Activated CD4-positive, alpha-beta T cell treated with anti-CD3 and anti-CD28 coated beads for 36 hours (primary cell): ENCODE measurements at regions of chr7 and their contacts with region 1.

Region 1: GRCh38 chr7:90155206-90155605 is 937 bp downstream of the STEAP1 start:
- DNase-seq: no peak
- ATAC-seq: no peak
- H3K4me3 Mint-ChIP-seq: no peak overlapping the region
- H3K27ac Mint-ChIP-seq: no peak overlapping the region
- H3K4me1 Mint-ChIP-seq: peaks cover 5% of the 10 kb centered on the region
- H3K27me3 Mint-ChIP-seq: peaks cover 31% of the 10 kb centered on the region

Region 2: DNA sequence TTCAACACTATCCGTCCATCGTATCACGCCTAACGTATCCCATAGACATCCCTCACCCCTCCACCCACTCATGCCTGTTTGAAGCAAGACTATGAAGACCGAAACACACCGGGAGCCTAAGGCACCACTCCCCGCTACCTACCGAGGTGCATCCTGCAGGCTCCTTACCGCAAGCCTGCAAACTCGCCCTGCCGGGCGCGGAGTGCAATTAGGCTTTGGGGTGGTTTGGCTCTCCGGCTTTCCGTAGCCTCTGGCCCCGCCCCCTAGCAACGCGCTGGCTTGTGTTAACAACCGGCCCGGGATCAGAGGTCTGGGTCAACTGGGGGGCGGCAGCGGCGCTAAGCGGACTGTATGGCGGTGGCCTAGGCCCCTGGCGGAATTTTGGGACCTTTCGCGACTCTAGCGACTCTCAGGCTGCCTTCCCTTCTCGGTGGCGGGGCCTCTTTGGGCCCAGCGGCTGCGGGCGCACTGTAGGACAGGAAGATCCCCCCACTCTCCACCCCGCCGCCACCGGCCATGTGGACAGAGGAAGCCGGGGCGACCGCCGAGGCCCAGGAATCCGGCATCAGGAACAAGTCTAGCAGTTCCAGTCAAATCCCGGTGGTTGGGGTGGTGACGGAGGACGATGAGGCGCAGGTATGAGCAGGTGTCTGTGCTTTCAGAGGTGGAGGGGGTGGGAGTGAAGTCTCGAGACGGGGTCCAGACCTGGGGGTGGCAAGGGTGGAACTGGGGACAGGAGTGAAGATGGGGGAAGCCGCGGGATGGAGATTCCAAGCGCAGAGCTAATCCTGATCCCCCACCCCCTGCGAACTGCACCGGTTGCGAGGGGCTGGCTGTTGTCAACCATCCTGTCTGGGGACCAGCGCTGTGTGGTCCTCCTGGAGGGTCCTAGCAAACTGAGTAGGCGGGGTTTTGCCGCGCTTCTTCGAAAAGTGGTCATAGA is 90.0 kb after region 1 on chr7 and contains the start of gene CFAP69:
- CTCF ChIA-PET with region 1: interaction called, 4 read pairs
- POLR2A ChIA-PET with region 1: no interaction called
- intact Hi-C with region 1: loop called in 1 of 2 experiments (anchors 1 kb)
- DNase-seq: peak; percentile 92
- ATAC-seq: peak; percentile 97
- H3K4me3 Mint-ChIP-seq: peak within 1 kb of the TSS; percentile 77
- H3K27ac Mint-ChIP-seq: peak within 1 kb of the TSS; percentile 0
- H3K4me1 Mint-ChIP-seq: peaks cover 16% of the 10 kb centered on the region
- H3K27me3 Mint-ChIP-seq: peaks cover 32% of the 10 kb centered on the region
- total RNA-seq, gene CFAP69: 0.25 to 0.70 TPM

Region 3: GRCh38 chr7:90262438-90262837 is 107.2 kb after region 1 on chr7:
- CTCF ChIA-PET with region 1: interaction called, 5 read pairs
- POLR2A ChIA-PET with region 1: no interaction called
- intact Hi-C with region 1: loop called (anchors 1 to 2 kb)
- DNase-seq: no peak
- ATAC-seq: no peak
- H3K4me3 Mint-ChIP-seq: no peak overlapping the region
- H3K27ac Mint-ChIP-seq: no peak overlapping the region
- H3K4me1 Mint-ChIP-seq: no peaks in the 10 kb centered on the region
- H3K27me3 Mint-ChIP-seq: peaks cover 5% of the 10 kb centered on the region

Region 4: DNA sequence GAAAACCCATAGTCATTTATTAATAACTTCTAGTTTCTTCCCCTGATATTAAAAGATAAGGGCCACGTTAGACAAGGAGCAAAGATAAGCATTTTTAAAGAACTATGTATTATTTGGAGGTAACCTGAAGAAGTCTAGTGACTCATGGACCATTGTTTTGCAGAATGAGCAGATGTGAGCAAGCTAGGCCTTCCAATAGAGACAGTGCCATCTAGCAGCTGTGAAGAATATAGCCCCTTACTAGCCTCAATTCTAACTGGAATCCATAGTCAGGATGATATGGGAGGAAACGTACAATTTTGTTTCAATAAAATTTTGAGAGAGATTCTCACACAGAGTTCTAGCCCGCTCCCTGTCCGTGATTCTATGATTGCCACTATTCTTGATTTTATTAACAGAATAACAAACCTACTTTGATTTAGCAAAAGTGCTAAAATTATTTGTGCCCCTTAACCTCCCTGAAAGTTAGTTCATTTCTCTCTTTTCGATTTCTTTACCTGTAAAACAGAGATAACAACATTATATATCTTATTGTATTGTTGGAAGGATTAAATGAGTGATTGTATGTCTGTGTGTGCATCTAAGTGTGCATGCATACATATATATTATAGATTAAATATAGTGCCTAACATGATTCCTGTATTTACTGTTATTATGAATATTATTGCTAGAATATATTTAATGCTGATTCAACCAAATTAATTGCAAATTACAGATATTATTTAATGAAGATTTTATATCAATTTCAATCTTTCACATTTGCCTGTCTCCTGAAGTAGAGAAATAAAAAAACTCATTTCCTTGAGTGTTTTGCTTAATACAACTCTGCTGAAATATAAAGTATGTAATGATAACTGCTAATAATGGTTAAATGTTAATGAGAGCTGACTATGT is 143.2 kb after region 1 on chr7:
- CTCF ChIA-PET with region 1: interaction called, 3 read pairs
- POLR2A ChIA-PET with region 1: no interaction called
- intact Hi-C with region 1: loop called in 1 of 2 experiments (anchors 1 kb)
- DNase-seq: peak; percentile 8
- ATAC-seq: peak; percentile 94
- H3K4me3 Mint-ChIP-seq: no peak overlapping the region
- H3K27ac Mint-ChIP-seq: no peak overlapping the region
- H3K4me1 Mint-ChIP-seq: no peaks in the 10 kb centered on the region
- H3K27me3 Mint-ChIP-seq: peaks cover 4% of the 10 kb centered on the region

Region 5: DNA sequence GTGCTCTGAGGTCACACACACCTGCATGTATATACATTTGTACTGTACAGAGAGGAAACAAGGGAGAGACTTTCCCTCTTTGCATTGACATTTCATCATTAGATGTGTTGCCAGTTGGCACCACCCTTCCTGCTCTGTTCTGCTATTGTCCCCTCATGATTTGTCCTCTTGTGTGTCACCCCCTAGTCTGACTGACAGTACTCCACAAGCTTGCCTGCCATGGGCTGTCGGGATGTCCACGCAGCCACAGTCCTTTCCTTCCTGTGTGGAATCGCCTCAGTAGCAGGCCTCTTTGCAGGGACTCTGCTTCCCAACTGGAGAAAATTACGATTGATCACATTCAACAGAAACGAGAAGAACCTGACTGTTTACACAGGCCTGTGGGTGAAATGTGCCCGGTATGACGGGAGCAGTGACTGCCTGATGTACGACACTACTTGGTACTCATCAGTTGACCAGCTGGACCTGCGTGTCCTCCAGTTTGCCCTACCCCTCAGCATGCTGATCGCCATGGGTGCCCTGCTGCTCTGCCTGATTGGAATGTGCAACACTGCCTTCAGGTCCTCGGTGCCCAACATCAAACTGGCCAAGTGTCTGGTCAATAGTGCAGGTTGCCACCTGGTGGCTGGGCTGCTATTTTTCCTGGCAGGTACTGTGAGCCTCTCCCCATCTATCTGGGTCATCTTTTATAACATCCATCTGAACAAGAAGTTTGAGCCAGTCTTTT is 257.4 kb after region 1 on chr7:
- CTCF ChIA-PET with region 1: interaction called, 4 read pairs
- POLR2A ChIA-PET with region 1: no interaction called
- intact Hi-C with region 1: loop called in 1 of 2 experiments (anchors 5 kb)
- DNase-seq: peak; percentile 48
- ATAC-seq: peak; percentile 49
- H3K4me3 Mint-ChIP-seq: no peak overlapping the region
- H3K27ac Mint-ChIP-seq: no peak overlapping the region
- H3K4me1 Mint-ChIP-seq: no peaks in the 10 kb centered on the region
- H3K27me3 Mint-ChIP-seq: no peaks in the 10 kb centered on the region

Region 6: DNA sequence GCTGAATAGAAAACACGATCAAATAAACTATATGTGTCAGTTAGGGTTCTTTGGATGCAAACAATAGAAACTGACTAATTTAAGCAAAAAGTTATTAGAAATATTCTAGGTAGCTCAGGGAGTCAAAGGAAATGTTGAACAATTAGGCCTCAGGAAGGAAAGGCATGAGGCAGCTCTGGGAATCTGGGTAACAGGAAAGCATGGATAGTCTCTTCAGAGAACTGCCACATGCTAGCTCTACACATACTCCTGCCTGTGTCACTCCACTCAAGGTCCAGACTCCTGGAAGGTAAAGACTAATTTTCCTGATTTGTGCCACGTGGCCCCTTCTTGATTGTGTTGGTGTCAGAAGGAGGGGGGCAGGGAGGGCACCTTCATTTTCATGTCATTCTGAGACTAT is 290.4 kb after region 1 on chr7:
- CTCF ChIA-PET with region 1: no interaction called
- POLR2A ChIA-PET with region 1: no interaction called
- intact Hi-C with region 1: no loop called
- DNase-seq: no peak
- ATAC-seq: no peak
- H3K4me3 Mint-ChIP-seq: no peak overlapping the region
- H3K27ac Mint-ChIP-seq: no peak overlapping the region
- H3K4me1 Mint-ChIP-seq: no peaks in the 10 kb centered on the region
- H3K27me3 Mint-ChIP-seq: peaks cover 9% of the 10 kb centered on the region